ENCODE measurements at regions of chr1 and their contacts with region 1.

Region 1: GRCh38 chr1:196380316-196380715 is 227.9 kb downstream of the KCNT2 start:
- DNase-seq: no peak
- H3K4me3 ChIP-seq: no peak overlapping the region
- H3K27me3 ChIP-seq: no peaks in the 10 kb centered on the region
- CTCF ChIP-seq: no peak

Region 2: DNA sequence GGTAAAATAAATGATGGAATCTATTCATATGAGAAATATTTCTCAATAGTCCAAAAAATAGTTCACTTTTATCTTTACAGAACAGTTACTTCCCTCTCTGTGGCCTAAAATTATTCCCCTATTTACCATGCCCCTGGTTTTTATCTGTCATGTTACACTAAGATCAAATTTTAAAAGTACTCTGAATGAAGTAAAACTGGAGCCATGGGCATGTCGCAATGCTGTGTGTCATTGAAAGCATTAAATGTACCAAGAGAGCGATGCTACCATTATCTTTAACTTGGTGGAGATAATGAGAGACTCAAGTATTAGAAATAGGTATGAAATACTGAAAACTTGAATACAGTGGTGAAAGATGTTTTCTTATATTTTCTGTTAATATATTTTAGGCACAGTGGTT is 81.8 kb after region 1 on chr1:
- CTCF ChIA-PET with region 1: no interaction called
- POLR2A ChIA-PET with region 1: interaction called, 10 read pairs
- DNase-seq: no peak
- H3K4me3 ChIP-seq: no peak overlapping the region
- H3K27me3 ChIP-seq: no peaks in the 10 kb centered on the region
- CTCF ChIP-seq: no peak

Measured in BJ (cell line).